ENCODE measurements at regions of chr16 and their contacts with region 1.

Region 1: DNA sequence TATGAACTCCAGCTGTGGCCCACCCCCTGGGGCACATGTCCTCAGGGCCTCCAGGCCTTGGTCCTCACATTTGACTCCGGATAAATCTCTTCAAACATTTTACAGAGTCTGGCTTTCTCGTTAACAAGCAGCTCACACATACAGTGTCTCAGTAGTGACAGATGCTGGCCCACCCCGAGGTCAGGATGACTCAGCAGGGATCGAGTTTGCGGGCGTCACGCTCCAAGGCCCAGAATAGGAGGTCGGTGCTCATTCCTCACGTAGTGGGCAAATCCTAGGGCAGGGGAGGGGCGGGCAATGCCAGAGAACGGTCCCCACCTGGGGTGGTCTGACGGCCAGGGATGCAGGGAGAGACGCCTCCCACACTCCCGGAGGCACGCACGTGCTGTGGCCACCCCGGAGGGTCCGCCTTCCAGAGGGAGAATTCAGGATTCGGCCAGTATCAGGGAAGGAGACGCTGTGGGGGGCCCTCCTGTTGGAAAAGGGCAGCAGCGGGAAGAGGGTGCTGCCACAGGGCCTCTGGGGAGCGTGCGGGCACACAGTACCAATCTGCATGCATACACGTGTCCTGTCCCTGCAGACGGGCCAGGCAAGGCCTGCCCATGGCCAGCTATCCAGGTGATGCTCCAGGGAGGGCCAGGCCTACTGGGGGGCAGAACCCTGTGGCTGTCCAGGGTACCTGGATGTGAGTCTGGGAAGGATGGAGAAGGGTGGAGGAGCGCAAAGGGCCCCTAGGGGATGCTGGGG is 8.6 kb downstream of the SLC7A5 start:
- DNase-seq: no peak
- H3K4me3 ChIP-seq: no peak overlapping the region
- H3K27ac ChIP-seq: no peak overlapping the region
- H3K4me1 ChIP-seq: peaks cover 0 to 6% (median 0%) of the 10 kb centered on the region in 4 experiments; a peak in 3 of 7 replicates
- H3K27me3 ChIP-seq: peaks cover 0 to 11% (median 4%) of the 10 kb centered on the region in 4 experiments; a peak in 3 of 7 replicates
- CTCF ChIP-seq: no peak
- EP300 ChIP-seq: no peak
- POLR2A ChIP-seq: no peak; a peak in 1 of 3 replicates
- RAD21 ChIP-seq: no peak

Region 2: DNA sequence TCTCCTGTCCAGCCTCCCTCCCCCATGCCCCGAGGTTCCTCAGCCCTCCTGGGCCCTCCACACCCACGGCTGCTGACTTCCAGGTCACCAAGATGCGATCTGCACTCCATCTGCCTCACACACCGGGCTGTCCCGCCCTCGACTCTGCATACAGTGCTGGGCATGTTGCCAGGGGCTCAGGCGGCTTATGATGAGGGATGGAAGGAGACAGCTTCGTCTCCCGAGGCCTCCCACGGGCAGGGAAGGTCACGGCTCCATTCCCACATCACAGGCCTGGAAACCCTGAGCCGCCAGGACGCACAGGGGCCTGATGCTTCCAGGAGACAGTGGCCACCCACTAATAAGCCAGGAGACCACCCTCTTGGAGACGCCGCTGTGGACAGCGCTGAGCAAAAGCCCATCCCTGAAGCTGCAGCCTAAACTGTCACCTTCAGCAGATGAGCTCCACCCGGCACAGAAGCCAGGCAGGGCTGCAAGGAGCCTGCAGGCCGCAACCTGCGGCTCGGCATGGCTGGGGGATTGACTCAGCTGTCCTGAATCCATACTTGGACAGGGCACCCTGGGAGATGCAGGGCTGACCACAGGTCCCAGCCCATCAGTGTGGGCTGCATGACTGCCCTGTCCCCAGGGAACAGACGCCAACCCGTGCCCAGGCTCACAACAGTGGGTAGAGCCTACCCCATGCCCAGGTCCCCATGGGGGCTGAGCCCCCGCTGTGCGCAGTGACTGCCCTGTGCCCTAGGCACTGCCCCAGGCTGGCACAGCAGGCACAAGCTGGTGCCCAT is 25.9 kb before region 1 on chr16:
- CTCF ChIA-PET with region 1: interaction called, 115 read pairs
- POLR2A ChIA-PET with region 1: interaction called, 507 read pairs
- DNase-seq: no peak
- H3K4me3 ChIP-seq: no peak overlapping the region
- H3K27ac ChIP-seq: no peak overlapping the region
- H3K4me1 ChIP-seq: peaks cover 0 to 10% (median 5%) of the 10 kb centered on the region in 4 experiments; a peak in 6 of 7 replicates
- H3K27me3 ChIP-seq: no peaks in the 10 kb centered on the region
- CTCF ChIP-seq: no peak
- EP300 ChIP-seq: no peak
- POLR2A ChIP-seq: no peak
- RAD21 ChIP-seq: no peak

Region 3: GRCh38 chr16:87877938-87878507 is 17.3 kb after region 1 on chr16:
- CTCF ChIA-PET with region 1: no interaction called
- POLR2A ChIA-PET with region 1: interaction called, 507 read pairs
- DNase-seq: no peak
- H3K4me3 ChIP-seq: no peak overlapping the region
- H3K27ac ChIP-seq: no peak overlapping the region
- H3K4me1 ChIP-seq: peaks cover 3 to 26% (median 13%) of the 10 kb centered on the region in 4 experiments
- H3K27me3 ChIP-seq: no peaks in the 10 kb centered on the region; a peak in 1 of 7 replicates
- CTCF ChIP-seq: peak; percentile 12 to 55 (median 52); a peak in 3 of 4 replicates
- EP300 ChIP-seq: no peak
- POLR2A ChIP-seq: no peak
- RAD21 ChIP-seq: peak; percentile 8 to 40; a peak in 2 of 4 replicates

Region 4: GRCh38 chr16:88005181-88005581 is 144.5 kb after region 1 on chr16:
- CTCF ChIA-PET with region 1: no interaction called
- POLR2A ChIA-PET with region 1: no interaction called
- DNase-seq: peak in 1 of 2 experiments; percentile 70
- H3K4me3 ChIP-seq: no peak overlapping the region
- H3K27ac ChIP-seq: no peak overlapping the region
- H3K4me1 ChIP-seq: peaks cover 0 to 8% (median 2%) of the 10 kb centered on the region in 4 experiments; a peak in 3 of 7 replicates
- H3K27me3 ChIP-seq: no peaks in the 10 kb centered on the region
- CTCF ChIP-seq: peak; percentile 76 to 91 (median 85)
- EP300 ChIP-seq: no peak
- POLR2A ChIP-seq: no peak
- RAD21 ChIP-seq: peak; percentile 76 to 82

Measured in H1 (cell line).